GM10248 (cell line): ENCODE measurements at regions of chr4 and their contacts with region 1.

Region 1: GRCh38 chr4:105785792-105786191 is 77.2 kb downstream of the GSTCD start:
- DNase-seq: no peak
- CTCF ChIP-seq: no peak

Region 2: DNA sequence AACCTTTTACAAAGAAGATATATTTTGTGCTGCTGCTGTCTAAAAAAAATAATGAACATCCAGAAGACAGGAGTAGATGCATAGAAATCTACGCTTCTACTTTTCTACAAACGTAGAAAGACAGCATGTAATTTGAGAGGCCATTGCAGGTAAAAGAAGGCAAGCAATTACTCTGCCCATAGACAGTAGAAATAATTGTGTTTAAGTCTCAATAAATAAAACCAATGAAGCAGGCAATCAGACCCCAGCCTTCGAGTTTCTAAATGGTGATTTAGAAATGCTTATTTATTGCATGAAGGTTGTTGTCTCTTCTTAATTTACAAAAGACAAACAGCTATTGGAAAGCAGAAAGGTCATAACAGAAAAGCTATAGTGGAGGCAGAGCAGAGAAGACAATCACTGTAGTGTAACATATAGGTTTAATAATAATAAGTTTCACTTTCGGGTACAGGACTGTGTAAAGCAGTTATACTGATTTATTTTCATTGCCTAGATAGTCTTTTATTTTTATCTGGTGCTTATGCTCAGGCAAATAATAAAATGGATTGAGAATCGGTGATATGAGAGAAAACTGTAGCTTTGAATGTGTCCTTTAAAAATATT is 1943.1 kb before region 1 on chr4:
- CTCF ChIA-PET with region 1: no interaction called
- POLR2A ChIA-PET with region 1: no interaction called
- DNase-seq: no peak
- CTCF ChIP-seq: no peak

Region 3: DNA sequence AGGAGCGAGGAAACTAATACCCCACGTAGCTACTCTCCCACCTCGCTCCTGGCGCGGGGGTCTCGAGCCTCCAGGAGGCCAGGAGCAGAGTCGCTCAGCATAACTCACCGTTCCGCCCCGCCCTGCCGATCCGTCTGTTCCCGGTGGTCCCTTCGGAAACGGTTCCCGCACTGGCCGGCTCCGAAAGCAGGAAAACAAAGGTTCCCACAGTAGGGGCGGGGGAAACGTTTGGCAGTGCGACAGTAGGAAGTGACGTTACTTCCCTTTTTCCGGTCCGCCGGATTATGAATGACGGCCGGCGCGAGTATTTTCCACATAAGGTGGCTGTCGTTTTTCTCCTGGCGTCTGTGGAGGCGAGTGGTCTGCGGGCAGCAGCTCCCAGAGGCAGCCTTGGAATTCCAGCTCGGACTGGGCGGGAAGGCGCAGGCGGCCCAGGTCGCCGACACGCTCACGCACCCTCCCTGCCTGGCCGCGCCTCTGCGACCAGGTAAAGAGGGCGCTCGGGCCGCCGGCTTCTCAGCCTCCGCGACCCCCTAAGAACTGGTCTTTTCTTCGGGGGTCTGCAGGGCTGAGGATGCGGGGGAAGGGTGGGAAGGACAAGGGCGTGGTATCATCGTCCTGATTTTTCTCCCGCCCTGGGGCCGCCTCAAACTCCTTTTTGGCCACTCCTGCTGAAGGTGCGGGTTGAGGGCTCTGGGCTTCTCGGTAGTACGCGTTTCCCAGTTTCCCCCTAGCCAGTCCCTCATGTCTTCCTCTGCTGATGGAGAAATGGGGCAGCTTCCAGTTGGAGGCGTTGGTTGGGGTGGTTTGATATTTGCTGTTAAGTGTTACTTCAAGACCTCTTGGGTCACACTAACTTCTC is 77.0 kb before region 1 on chr4 and contains the starts of genes GSTCD and INTS12:
- CTCF ChIA-PET with region 1: no interaction called
- POLR2A ChIA-PET with region 1: interaction called, 10 read pairs
- DNase-seq: peak; percentile 83
- CTCF ChIP-seq: no peak

Region 4: GRCh38 chr4:105815701-105816100 is 29.9 kb after region 1 on chr4:
- CTCF ChIA-PET with region 1: no interaction called
- POLR2A ChIA-PET with region 1: no interaction called
- DNase-seq: no peak
- CTCF ChIP-seq: no peak

Region 5: DNA sequence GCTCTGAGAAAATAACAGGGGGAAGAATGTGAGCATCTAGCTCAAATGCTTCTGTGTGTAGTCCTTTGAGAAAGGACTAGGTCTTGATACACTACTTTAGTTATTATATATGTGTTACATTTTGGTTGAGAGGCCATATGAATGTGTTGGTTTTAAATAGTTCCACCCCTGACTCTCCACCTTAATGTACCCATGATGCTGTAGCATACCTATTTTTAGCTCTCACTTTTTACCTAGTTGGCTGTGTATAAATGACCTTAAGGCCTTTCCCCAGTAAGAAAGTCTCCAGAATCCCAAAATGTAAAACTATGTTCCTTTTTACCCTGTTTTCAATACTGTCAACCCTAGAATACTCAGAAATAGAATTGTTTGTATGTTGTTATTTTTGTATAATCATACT is 89.4 kb after region 1 on chr4:
- CTCF ChIA-PET with region 1: no interaction called
- POLR2A ChIA-PET with region 1: no interaction called
- DNase-seq: no peak
- CTCF ChIP-seq: no peak

Region 6: GRCh38 chr4:106114284-106114683 is 328.5 kb after region 1 on chr4:
- CTCF ChIA-PET with region 1: no interaction called
- POLR2A ChIA-PET with region 1: no interaction called
- DNase-seq: no peak
- CTCF ChIP-seq: no peak